Naive thymus-derived CD4-positive, alpha-beta T cell (primary cell): ENCODE measurements at regions of chr17 and their contacts with region 1.

Region 1: GRCh38 chr17:80892019-80892855 is 99.4 kb upstream of the CHMP6 start:
- DNase-seq: peak in 7 of 9 donors; percentile 17 to 81 (median 48)
- ATAC-seq: peak; percentile 86
- H3K4me3 ChIP-seq: peak overlapping the region; percentile 40
- H3K4me3 Mint-ChIP-seq: peak overlapping the region in 8 of 10 donors; percentile 64 to 89 (median 74)
- H3K27ac ChIP-seq: peak overlapping the region; percentile 66
- H3K27ac Mint-ChIP-seq: peak overlapping the region; percentile 79 to 100 (median 93)
- H3K4me1 ChIP-seq: peaks cover 38 to 39% of the 10 kb centered on the region in 2 donors
- H3K4me1 Mint-ChIP-seq: peaks cover 12 to 80% (median 40%) of the 10 kb centered on the region in 7 donors
- H3K27me3 ChIP-seq: no peaks in the 10 kb centered on the region
- H3K27me3 Mint-ChIP-seq: no peaks in the 10 kb centered on the region

Region 2: GRCh38 chr17:80544655-80545498 is 347.4 kb before region 1 on chr17 and contains the start of gene RPTOR:
- CTCF ChIA-PET with region 1: no interaction called
- POLR2A ChIA-PET with region 1: no interaction called
- intact Hi-C with region 1: loop called in 1 of 2 experiments (anchors 10 kb)
- DNase-seq: peak; percentile 71 to 91 (median 86)
- ATAC-seq: peak; percentile 100
- H3K4me3 ChIP-seq: peak within 1 kb of the TSS; percentile 97
- H3K4me3 Mint-ChIP-seq: peak within 1 kb of the TSS; percentile 88 to 97 (median 94)
- H3K27ac ChIP-seq: peak within 1 kb of the TSS; percentile 79
- H3K27ac Mint-ChIP-seq: peak within 1 kb of the TSS; percentile 85 to 97 (median 93)
- H3K4me1 ChIP-seq: peaks cover 13 to 15% of the 10 kb centered on the region in 2 donors
- H3K4me1 Mint-ChIP-seq: peaks cover 17 to 39% (median 32%) of the 10 kb centered on the region in 7 donors
- H3K27me3 ChIP-seq: no peaks in the 10 kb centered on the region
- H3K27me3 Mint-ChIP-seq: peaks cover 0 to 4% (median 3%) of the 10 kb centered on the region in 5 donors
- total RNA-seq, gene RPTOR: 53.7 to 89.8 (median 69.5) TPM

Region 3: DNA sequence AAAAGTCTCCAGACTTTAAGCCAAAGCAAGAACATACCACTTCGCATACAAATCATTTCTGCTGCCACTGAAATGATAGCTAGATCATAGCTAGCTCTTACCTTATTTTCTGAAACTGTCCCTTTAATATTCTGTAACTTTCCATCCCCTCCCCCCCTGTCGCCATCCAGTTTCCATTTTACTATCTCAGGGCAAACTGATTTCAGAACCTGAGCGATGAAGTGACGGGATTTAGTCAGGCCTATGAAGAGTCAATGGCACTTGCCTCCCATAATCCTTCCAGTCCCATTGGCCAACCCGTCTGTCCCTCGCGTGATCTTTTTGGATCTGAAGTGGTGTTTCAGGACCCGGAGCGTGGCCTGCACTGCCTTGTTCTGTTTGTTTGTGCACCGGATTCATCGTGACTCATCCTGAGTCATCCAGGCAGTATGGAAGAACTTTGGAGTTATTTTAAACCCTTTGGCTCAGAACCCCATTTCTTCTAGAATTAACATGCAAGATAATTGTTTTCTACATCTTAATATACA is 100.4 kb before region 1 on chr17:
- CTCF ChIA-PET with region 1: no interaction called
- POLR2A ChIA-PET with region 1: no interaction called
- intact Hi-C with region 1: loop called in 1 of 2 experiments (anchors 5 kb)
- DNase-seq: peak in 1 of 9 donors; percentile 58
- ATAC-seq: no peak
- H3K4me3 ChIP-seq: peak overlapping the region; percentile 37
- H3K4me3 Mint-ChIP-seq: peak overlapping the region; percentile 75 to 96 (median 88)
- H3K27ac ChIP-seq: peak overlapping the region; percentile 74
- H3K27ac Mint-ChIP-seq: peak overlapping the region; percentile 89 to 99 (median 96)
- H3K4me1 ChIP-seq: peaks cover 46 to 60% of the 10 kb centered on the region in 2 donors
- H3K4me1 Mint-ChIP-seq: peaks cover 51 to 93% (median 86%) of the 10 kb centered on the region in 7 donors
- H3K27me3 ChIP-seq: no peaks in the 10 kb centered on the region
- H3K27me3 Mint-ChIP-seq: no peaks in the 10 kb centered on the region

Region 4: GRCh38 chr17:80847496-80848230 is 44.6 kb before region 1 on chr17:
- CTCF ChIA-PET with region 1: no interaction called
- POLR2A ChIA-PET with region 1: no interaction called
- intact Hi-C with region 1: loop called in 1 of 2 experiments (anchors 1 kb)
- DNase-seq: peak in 8 of 9 donors; percentile 33 to 67 (median 58)
- ATAC-seq: peak; percentile 89
- H3K4me3 ChIP-seq: peak overlapping the region; percentile 9
- H3K4me3 Mint-ChIP-seq: peak overlapping the region; percentile 52 to 88 (median 80)
- H3K27ac ChIP-seq: peak overlapping the region; percentile 77
- H3K27ac Mint-ChIP-seq: peak overlapping the region; percentile 61 to 97 (median 94)
- H3K4me1 ChIP-seq: peaks cover 15 to 50% of the 10 kb centered on the region in 2 donors
- H3K4me1 Mint-ChIP-seq: peaks cover 35 to 69% (median 67%) of the 10 kb centered on the region in 7 donors
- H3K27me3 ChIP-seq: no peaks in the 10 kb centered on the region
- H3K27me3 Mint-ChIP-seq: no peaks in the 10 kb centered on the region

Region 5: GRCh38 chr17:80871341-80871740 is 20.9 kb before region 1 on chr17:
- CTCF ChIA-PET with region 1: no interaction called
- POLR2A ChIA-PET with region 1: no interaction called
- intact Hi-C with region 1: loop called in 1 of 2 experiments (anchors 2 kb)
- DNase-seq: peak in 3 of 9 donors; percentile 32 to 40 (median 36)
- ATAC-seq: peak; percentile 56
- H3K4me3 ChIP-seq: peak overlapping the region; percentile 39
- H3K4me3 Mint-ChIP-seq: peak overlapping the region; percentile 67 to 81 (median 77)
- H3K27ac ChIP-seq: peak overlapping the region; percentile 29
- H3K27ac Mint-ChIP-seq: peak overlapping the region; percentile 26 to 84 (median 63)
- H3K4me1 ChIP-seq: peaks cover 13 to 39% of the 10 kb centered on the region in 2 donors
- H3K4me1 Mint-ChIP-seq: peaks cover 45 to 84% (median 79%) of the 10 kb centered on the region in 7 donors
- H3K27me3 ChIP-seq: no peaks in the 10 kb centered on the region
- H3K27me3 Mint-ChIP-seq: no peaks in the 10 kb centered on the region

Region 6: DNA sequence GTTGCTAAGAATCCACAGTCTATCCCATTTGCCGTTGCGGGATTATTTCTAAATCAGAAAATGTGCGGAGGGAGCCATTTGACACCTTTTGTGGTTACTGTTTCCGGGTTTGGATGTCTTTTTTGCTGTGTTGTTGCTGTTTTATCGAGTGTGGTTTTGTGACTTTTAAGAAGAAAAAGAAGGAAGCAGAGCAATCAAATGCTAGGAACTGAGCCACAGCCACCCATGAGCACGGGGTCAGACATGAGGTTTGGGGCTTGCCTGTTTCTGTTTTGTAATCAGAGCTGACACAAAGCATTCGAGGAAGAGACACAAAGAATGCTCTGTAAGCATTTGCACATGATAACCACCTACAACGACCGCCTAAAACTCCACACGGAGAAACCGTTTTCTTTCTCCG is 46.3 kb after region 1 on chr17:
- CTCF ChIA-PET with region 1: no interaction called
- POLR2A ChIA-PET with region 1: no interaction called
- intact Hi-C with region 1: loop called in 1 of 2 experiments (anchors 1 kb)
- DNase-seq: peak in 8 of 9 donors; percentile 38 to 85 (median 75)
- ATAC-seq: peak; percentile 91
- H3K4me3 ChIP-seq: peak overlapping the region; percentile 33
- H3K4me3 Mint-ChIP-seq: peak overlapping the region; percentile 48 to 86 (median 77)
- H3K27ac ChIP-seq: no peak overlapping the region
- H3K27ac Mint-ChIP-seq: peak overlapping the region; percentile 48 to 91 (median 81)
- H3K4me1 ChIP-seq: peaks cover 8 to 17% of the 10 kb centered on the region in 2 donors
- H3K4me1 Mint-ChIP-seq: peaks cover 20 to 36% (median 31%) of the 10 kb centered on the region in 7 donors
- H3K27me3 ChIP-seq: no peaks in the 10 kb centered on the region
- H3K27me3 Mint-ChIP-seq: no peaks in the 10 kb centered on the region